Common myeloid progenitor, CD34-positive (primary cell): ENCODE measurements at regions of chr5 and their contacts with region 1.

Region 1: DNA sequence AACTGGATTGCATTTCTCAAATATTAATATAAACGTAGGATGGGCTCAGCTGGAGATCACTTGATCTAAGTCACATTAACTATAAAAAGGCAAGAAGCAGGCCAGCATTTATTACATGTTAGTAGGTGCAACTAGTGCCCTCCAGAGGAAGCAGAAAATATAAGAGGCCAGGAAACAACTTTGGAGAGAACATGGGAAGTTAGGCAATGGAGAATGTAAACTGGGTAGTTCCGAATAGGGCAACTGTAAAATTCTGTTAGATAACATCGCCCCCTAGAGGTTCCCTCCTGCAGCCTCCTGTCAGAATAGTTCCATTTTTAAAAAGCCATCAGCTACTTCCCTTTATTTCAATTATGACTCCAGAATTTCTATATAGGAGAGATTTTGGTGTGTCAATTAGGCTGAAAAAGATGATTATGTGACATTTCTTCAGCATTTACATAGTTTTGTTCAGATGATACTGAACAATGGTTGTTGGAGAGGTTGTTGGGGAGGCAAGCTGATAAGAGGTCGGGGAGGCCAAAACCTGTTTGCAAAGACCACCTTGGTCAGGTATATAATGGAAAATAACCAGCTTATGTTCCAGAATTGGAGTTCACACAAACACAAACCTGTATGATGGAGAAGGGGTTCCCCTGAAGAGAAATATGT is 22.4 kb downstream of the CCL28 start:
- DNase-seq: peak; percentile 91 to 95 (median 92)
- H3K4me3 ChIP-seq: no peak overlapping the region
- H3K27ac ChIP-seq: no peak overlapping the region
- H3K4me1 ChIP-seq: no peaks in the 10 kb centered on the region
- H3K27me3 ChIP-seq: no peaks in the 10 kb centered on the region

Region 2: GRCh38 chr5:43231977-43232376 is 157.8 kb before region 1 on chr5:
- CTCF ChIA-PET with region 1: interaction called, 12 read pairs
- POLR2A ChIA-PET with region 1: no interaction called
- DNase-seq: peak; percentile 55 to 65 (median 56)
- H3K4me3 ChIP-seq: no peak overlapping the region
- H3K27ac ChIP-seq: no peak overlapping the region
- H3K4me1 ChIP-seq: no peaks in the 10 kb centered on the region
- H3K27me3 ChIP-seq: peaks cover 0 to 1% (median 0%) of the 10 kb centered on the region in 5 experiments

Region 3: DNA sequence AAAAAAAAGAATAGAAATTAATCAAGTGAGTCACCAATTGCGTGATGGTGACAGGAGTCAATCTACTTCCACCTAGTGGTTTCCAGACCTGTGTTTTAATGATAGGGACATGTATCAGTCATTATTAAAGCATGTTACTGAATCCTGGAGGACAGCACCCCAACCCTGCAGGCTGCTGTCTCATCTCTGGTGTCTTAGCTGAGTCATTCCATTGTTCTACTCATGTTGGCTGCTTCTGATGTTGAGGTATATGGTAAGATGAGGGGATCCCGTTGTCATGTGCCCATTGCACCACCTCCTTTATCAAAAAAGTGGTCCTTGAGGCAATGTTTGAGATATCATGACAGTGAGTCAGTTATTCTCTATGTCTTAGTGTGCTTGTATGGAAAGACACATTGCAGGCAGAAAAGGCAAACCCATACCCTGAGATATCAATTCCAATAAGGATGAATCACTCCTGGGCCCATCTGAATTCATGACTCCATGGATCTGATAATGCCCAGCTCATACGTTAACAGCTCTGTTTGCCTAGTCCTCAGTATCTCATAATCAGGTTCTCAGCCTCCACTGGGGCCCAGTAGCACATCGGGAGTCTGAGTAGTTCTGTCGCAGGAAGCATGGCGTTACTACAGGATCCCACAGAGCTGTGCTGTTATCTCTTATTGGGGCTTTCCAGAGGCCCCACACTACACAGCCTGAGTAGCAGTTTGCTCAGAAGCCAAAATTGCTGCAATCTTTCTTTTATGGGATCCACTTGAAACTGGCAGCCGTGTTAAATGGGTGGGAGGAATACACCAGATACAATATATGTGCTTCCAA is 107.8 kb before region 1 on chr5:
- CTCF ChIA-PET with region 1: no interaction called
- POLR2A ChIA-PET with region 1: no interaction called
- DNase-seq: no peak
- H3K4me3 ChIP-seq: no peak overlapping the region
- H3K27ac ChIP-seq: no peak overlapping the region
- H3K4me1 ChIP-seq: no peaks in the 10 kb centered on the region
- H3K27me3 ChIP-seq: no peaks in the 10 kb centered on the region

Region 4: GRCh38 chr5:43313035-43313853 is 76.6 kb before region 1 on chr5 and contains the start of gene HMGCS1:
- CTCF ChIA-PET with region 1: interaction called, 14 read pairs
- POLR2A ChIA-PET with region 1: no interaction called
- DNase-seq: peak; percentile 99 to 100 (median 100)
- H3K4me3 ChIP-seq: peak within 1 kb of the TSS; percentile 77 to 99 (median 87)
- H3K27ac ChIP-seq: peak within 1 kb of the TSS; percentile 83 to 94
- H3K4me1 ChIP-seq: peaks cover 13 to 52% (median 24%) of the 10 kb centered on the region in 4 experiments
- H3K27me3 ChIP-seq: no peaks in the 10 kb centered on the region

Region 5: GRCh38 chr5:43400081-43400480 is 10.3 kb after region 1 on chr5:
- CTCF ChIA-PET with region 1: interaction called, 11 read pairs
- POLR2A ChIA-PET with region 1: no interaction called
- DNase-seq: no peak
- H3K4me3 ChIP-seq: no peak overlapping the region
- H3K27ac ChIP-seq: no peak overlapping the region
- H3K4me1 ChIP-seq: peaks cover 2 to 14% (median 7%) of the 10 kb centered on the region in 4 experiments
- H3K27me3 ChIP-seq: no peaks in the 10 kb centered on the region

Region 6: GRCh38 chr5:43484106-43484849 is 94.5 kb after region 1 on chr5:
- CTCF ChIA-PET with region 1: interaction called, 10 read pairs
- POLR2A ChIA-PET with region 1: no interaction called
- DNase-seq: peak; percentile 91 to 95 (median 95)
- H3K4me3 ChIP-seq: peak overlapping the region; percentile 79 to 94 (median 91)
- H3K27ac ChIP-seq: peak overlapping the region; percentile 97 to 99
- H3K4me1 ChIP-seq: peaks cover 8 to 20% (median 14%) of the 10 kb centered on the region in 4 experiments
- H3K27me3 ChIP-seq: no peaks in the 10 kb centered on the region

Region 7: GRCh38 chr5:43815504-43815903 is 425.7 kb after region 1 on chr5:
- CTCF ChIA-PET with region 1: no interaction called
- POLR2A ChIA-PET with region 1: no interaction called
- DNase-seq: no peak
- H3K4me3 ChIP-seq: no peak overlapping the region
- H3K27ac ChIP-seq: no peak overlapping the region
- H3K4me1 ChIP-seq: no peaks in the 10 kb centered on the region
- H3K27me3 ChIP-seq: no peaks in the 10 kb centered on the region